B cell (primary cell): ENCODE measurements at regions of chr20 and their contacts with region 1.

Region 1: DNA sequence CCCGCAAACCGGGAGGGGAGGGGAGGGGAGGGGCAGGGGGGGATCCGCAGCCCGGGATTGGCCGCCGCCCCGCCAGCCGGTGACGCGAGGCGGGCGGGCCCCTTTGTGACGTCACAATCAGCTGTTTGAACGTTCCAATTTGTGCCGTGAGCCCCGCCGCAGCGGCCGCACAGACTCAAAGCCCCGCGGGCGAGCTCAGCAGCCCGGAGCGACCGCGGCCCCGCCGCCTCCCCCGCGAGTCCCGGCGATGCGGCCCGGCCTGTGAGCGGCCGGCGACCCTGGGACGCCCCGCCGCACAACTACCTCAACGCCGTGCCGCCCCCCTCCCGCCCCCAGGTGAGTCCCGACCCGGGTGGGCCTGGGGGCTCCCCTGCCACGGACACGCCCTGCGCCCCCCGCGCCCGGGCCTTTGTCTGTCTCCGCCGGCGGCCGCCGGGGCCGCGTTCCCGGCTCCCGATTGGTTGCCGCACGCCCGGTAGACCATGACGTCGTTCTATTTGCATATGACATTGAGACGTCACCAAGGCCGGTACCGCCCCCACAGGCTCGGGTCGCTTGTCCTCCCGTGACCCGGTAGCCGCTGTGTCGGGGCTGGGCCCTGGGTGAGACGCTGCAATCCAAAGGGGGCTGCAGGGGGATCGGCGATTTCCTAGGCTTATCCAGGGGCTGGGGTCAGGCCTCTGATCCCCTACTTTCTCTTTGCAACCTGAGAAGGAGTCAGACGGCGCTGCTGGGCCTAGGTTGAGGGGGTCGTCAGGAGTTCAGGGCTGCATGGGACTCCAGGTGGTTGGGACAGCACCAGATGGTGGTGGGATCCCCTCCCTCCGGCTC is at the start of gene TP53INP2:
- DNase-seq: peak; percentile 95
- ATAC-seq: peak; percentile 57
- H3K4me3 ChIP-seq: peak within 1 kb of the TSS; percentile 68 to 89 (median 81)
- H3K4me3 Mint-ChIP-seq: peak within 1 kb of the TSS; percentile 95
- H3K27ac ChIP-seq: peak within 1 kb of the TSS; percentile 52 to 95
- H3K27ac Mint-ChIP-seq: peak within 1 kb of the TSS; percentile 93
- H3K4me1 ChIP-seq: peaks cover 18 to 26% of the 10 kb centered on the region in 2 donors
- H3K4me1 Mint-ChIP-seq: peaks cover 26% of the 10 kb centered on the region
- H3K27me3 ChIP-seq: peaks cover 0 to 15% (median 0%) of the 10 kb centered on the region in 4 experiments
- H3K27me3 Mint-ChIP-seq: peaks cover 9% of the 10 kb centered on the region
- CTCF ChIP-seq: no peak
- total RNA-seq, gene TP53INP2: 7.7 and 8.1 TPM in 2 replicates

Region 2: GRCh38 chr20:33992923-33993575 is 711.3 kb before region 1 on chr20:
- CTCF ChIA-PET with region 1: no interaction called
- POLR2A ChIA-PET with region 1: no interaction called
- intact Hi-C with region 1: loop called (anchors 10 kb)
- DNase-seq: peak; percentile 99
- ATAC-seq: peak; percentile 84
- H3K4me3 ChIP-seq: peak overlapping the region; percentile 94 to 99 (median 98)
- H3K4me3 Mint-ChIP-seq: peak overlapping the region; percentile 92
- H3K27ac ChIP-seq: peak overlapping the region; percentile 90 to 91
- H3K27ac Mint-ChIP-seq: peak overlapping the region; percentile 99
- H3K4me1 ChIP-seq: peaks cover 40 to 48% of the 10 kb centered on the region in 2 donors
- H3K4me1 Mint-ChIP-seq: peaks cover 59% of the 10 kb centered on the region
- H3K27me3 ChIP-seq: no peaks in the 10 kb centered on the region
- H3K27me3 Mint-ChIP-seq: no peaks in the 10 kb centered on the region
- CTCF ChIP-seq: no peak

Region 3: DNA sequence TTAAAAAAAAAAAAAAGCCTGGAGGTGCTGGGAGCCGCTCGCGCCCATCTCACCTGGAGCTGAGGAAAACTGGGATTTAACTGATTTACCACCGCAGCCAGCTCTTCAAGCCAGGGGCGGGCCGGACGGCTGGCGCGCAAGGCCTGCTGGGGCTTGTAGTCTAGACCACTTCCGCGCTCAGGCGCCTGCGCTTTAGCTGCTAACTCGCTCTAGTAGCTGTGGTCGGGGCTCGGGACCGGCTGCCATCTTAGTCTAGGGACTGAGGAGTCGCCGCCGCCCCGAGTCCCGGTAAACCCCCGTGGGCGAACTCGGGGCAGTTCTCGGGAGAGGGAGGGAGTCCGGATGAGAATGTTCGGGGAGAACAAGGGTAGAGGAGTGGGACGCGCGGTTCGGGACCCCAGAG is 341.3 kb before region 1 on chr20 and contains the start of gene ITCH:
- CTCF ChIA-PET with region 1: interaction called, 4 read pairs
- POLR2A ChIA-PET with region 1: no interaction called
- intact Hi-C with region 1: loop called (anchors 1 kb)
- DNase-seq: peak; percentile 94
- ATAC-seq: peak; percentile 96
- H3K4me3 ChIP-seq: peak within 1 kb of the TSS; percentile 46 to 91 (median 88)
- H3K4me3 Mint-ChIP-seq: peak within 1 kb of the TSS; percentile 97
- H3K27ac ChIP-seq: peak within 1 kb of the TSS; percentile 81 to 96
- H3K27ac Mint-ChIP-seq: peak within 1 kb of the TSS; percentile 98
- H3K4me1 ChIP-seq: peaks cover 34 to 38% of the 10 kb centered on the region in 2 donors
- H3K4me1 Mint-ChIP-seq: peaks cover 35% of the 10 kb centered on the region
- H3K27me3 ChIP-seq: no peaks in the 10 kb centered on the region
- H3K27me3 Mint-ChIP-seq: no peaks in the 10 kb centered on the region
- CTCF ChIP-seq: no peak
- total RNA-seq, gene ITCH: 89.6 and 110 TPM in 2 replicates

Region 4: GRCh38 chr20:34415079-34415478 is 289.3 kb before region 1 on chr20:
- CTCF ChIA-PET with region 1: no interaction called
- POLR2A ChIA-PET with region 1: no interaction called
- intact Hi-C with region 1: no loop called
- DNase-seq: peak; percentile 31
- ATAC-seq: no peak
- H3K4me3 ChIP-seq: peak overlapping the region in 1 of 5 experiments; percentile 12
- H3K4me3 Mint-ChIP-seq: peak overlapping the region; percentile 64
- H3K27ac ChIP-seq: peak overlapping the region; percentile 35 to 42
- H3K27ac Mint-ChIP-seq: peak overlapping the region; percentile 74
- H3K4me1 ChIP-seq: peaks cover 16 to 20% of the 10 kb centered on the region in 2 donors
- H3K4me1 Mint-ChIP-seq: peaks cover 18% of the 10 kb centered on the region
- H3K27me3 ChIP-seq: no peaks in the 10 kb centered on the region
- H3K27me3 Mint-ChIP-seq: no peaks in the 10 kb centered on the region
- CTCF ChIP-seq: no peak

Region 5: GRCh38 chr20:34538671-34539123 is 165.7 kb before region 1 on chr20:
- CTCF ChIA-PET with region 1: interaction called, 69 read pairs
- POLR2A ChIA-PET with region 1: no interaction called
- intact Hi-C with region 1: loop called (anchors 1 kb)
- DNase-seq: peak; percentile 67
- ATAC-seq: peak; percentile 68
- H3K4me3 ChIP-seq: no peak overlapping the region
- H3K4me3 Mint-ChIP-seq: no peak overlapping the region
- H3K27ac ChIP-seq: no peak overlapping the region
- H3K27ac Mint-ChIP-seq: no peak overlapping the region
- H3K4me1 ChIP-seq: no peaks in the 10 kb centered on the region
- H3K4me1 Mint-ChIP-seq: peaks cover 12% of the 10 kb centered on the region
- H3K27me3 ChIP-seq: no peaks in the 10 kb centered on the region
- H3K27me3 Mint-ChIP-seq: no peaks in the 10 kb centered on the region
- CTCF ChIP-seq: peak; percentile 92

Region 6: DNA sequence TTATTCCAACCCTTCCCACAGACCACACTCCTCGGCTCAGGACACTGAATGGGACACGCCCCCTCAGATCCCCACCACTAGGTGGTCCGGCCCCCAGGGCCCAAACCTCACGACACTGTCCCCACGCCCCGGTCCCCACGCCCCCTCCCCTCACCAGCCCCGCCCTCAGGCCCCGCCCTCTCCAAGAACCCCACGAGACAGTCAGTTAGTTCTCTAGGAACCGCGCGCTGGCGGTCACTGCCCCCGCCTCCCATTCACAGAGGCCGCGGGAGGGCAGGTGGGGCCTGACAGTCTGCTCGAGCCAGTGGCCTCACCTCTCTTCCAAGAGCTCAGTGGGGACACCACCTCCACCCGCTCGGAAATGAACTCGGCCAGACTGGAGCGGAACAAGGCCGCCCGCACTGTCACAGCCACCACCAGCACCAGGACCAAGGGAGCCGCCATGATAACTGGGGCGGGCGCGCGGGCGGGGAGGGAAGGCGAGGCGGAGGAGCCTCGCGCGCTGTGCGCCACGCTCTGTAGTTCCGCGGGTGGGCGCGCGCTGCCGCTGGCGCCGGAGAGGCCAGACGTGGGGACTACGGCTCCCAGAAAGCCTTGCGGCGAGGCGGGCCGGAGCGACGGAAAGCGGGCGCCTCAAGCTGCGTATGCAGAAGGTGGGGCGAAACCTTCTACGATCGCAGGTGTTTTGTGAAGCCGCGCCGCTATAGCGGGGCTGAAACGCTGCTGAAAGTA is 27.6 kb before region 1 on chr20 and contains the start of gene PIGU:
- CTCF ChIA-PET with region 1: interaction called, 21 read pairs
- POLR2A ChIA-PET with region 1: interaction called, 10 read pairs
- intact Hi-C with region 1: loop called (anchors 1 kb)
- DNase-seq: peak; percentile 98
- ATAC-seq: peak; percentile 93
- H3K4me3 ChIP-seq: peak within 1 kb of the TSS; percentile 74 to 96 (median 78)
- H3K4me3 Mint-ChIP-seq: peak within 1 kb of the TSS; percentile 98
- H3K27ac ChIP-seq: peak within 1 kb of the TSS; percentile 74 to 86
- H3K27ac Mint-ChIP-seq: peak within 1 kb of the TSS; percentile 95
- H3K4me1 ChIP-seq: peaks cover 11 to 12% of the 10 kb centered on the region in 2 donors
- H3K4me1 Mint-ChIP-seq: peaks cover 17% of the 10 kb centered on the region
- H3K27me3 ChIP-seq: no peaks in the 10 kb centered on the region
- H3K27me3 Mint-ChIP-seq: no peaks in the 10 kb centered on the region
- CTCF ChIP-seq: no peak
- total RNA-seq, gene PIGU: 15.4 and 19.3 TPM in 2 replicates

Region 7: GRCh38 chr20:34825530-34826362 is 121.4 kb after region 1 on chr20 and contains the start of gene NCOA6:
- CTCF ChIA-PET with region 1: no interaction called
- POLR2A ChIA-PET with region 1: no interaction called
- intact Hi-C with region 1: loop called (anchors 10 kb)
- DNase-seq: peak; percentile 88
- ATAC-seq: peak; percentile 74
- H3K4me3 ChIP-seq: peak within 1 kb of the TSS; percentile 68 to 94 (median 82)
- H3K4me3 Mint-ChIP-seq: peak within 1 kb of the TSS; percentile 94
- H3K27ac ChIP-seq: peak within 1 kb of the TSS; percentile 60 to 67
- H3K27ac Mint-ChIP-seq: peak within 1 kb of the TSS; percentile 92
- H3K4me1 ChIP-seq: peaks cover 19 to 21% of the 10 kb centered on the region in 2 donors
- H3K4me1 Mint-ChIP-seq: peaks cover 31% of the 10 kb centered on the region
- H3K27me3 ChIP-seq: no peaks in the 10 kb centered on the region
- H3K27me3 Mint-ChIP-seq: peaks cover 3% of the 10 kb centered on the region
- CTCF ChIP-seq: no peak
- total RNA-seq, gene NCOA6: 31.0 and 31.9 TPM in 2 replicates

Region 8: DNA sequence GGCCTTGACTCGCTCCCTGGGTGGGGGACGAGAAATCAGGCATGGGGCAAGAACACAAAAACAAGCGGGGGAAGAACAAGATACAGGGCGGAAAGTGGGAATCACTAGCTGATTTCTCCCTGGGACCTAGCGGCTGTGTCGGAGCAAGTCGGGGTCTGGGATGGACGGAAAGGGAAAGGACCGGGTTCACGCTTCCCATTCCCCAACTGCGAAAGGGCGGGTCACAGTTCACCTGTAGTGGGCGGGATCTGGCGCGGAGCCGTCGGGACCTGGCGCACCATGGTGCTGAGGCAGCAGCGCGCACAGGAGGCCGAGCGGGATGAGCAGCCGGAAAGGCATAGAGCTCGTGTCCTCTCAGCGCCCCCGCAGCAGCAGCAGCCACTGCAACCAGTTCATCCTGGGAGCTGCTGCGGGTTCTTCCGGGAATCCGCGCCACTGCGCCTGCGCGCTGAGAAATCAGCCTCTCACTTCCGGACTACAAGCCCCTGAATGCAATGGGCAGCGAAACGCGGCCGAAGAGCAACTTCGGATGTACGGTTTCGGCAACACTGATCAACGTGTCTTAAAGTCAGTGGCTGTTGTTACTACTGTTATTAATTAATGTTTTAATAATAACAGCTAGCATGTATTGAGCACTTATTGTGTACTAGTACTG is 442.7 kb after region 1 on chr20 and contains the start of gene EDEM2:
- CTCF ChIA-PET with region 1: no interaction called
- POLR2A ChIA-PET with region 1: no interaction called
- intact Hi-C with region 1: loop called (anchors 10 kb)
- DNase-seq: peak; percentile 95
- ATAC-seq: peak; percentile 80
- H3K4me3 ChIP-seq: peak within 1 kb of the TSS; percentile 69 to 94 (median 90)
- H3K4me3 Mint-ChIP-seq: peak within 1 kb of the TSS; percentile 96
- H3K27ac ChIP-seq: peak within 1 kb of the TSS; percentile 79 to 89
- H3K27ac Mint-ChIP-seq: peak within 1 kb of the TSS; percentile 94
- H3K4me1 ChIP-seq: peaks cover 33 to 43% of the 10 kb centered on the region in 2 donors
- H3K4me1 Mint-ChIP-seq: peaks cover 36% of the 10 kb centered on the region
- H3K27me3 ChIP-seq: no peaks in the 10 kb centered on the region
- H3K27me3 Mint-ChIP-seq: no peaks in the 10 kb centered on the region
- CTCF ChIP-seq: no peak
- total RNA-seq, gene EDEM2: 28.1 and 28.6 TPM in 2 replicates